Heart left ventricle (tissue), 16 donors: ENCODE measurements at regions of chr1 and their contacts with region 1.

Region 1: GRCh38 chr1:212488397-212489283 is 55.9 kb downstream of the NENF start:
- DNase-seq: peak in 2 of 5 donors; percentile 29 to 41
- ATAC-seq: peak; percentile 41 to 76 (median 68)
- H3K4me3 ChIP-seq: no peak overlapping the region
- H3K27ac ChIP-seq: peak overlapping the region in 3 of 12 donors; percentile 42 to 76 (median 51)
- H3K4me1 ChIP-seq: peaks cover 0 to 48% (median 8%) of the 10 kb centered on the region in 12 donors
- H3K27me3 ChIP-seq: no peaks in the 10 kb centered on the region
- CTCF ChIP-seq: no peak
- POLR2A ChIP-seq: no peak

Region 2: GRCh38 chr1:212503714-212504113 is 15.1 kb after region 1 on chr1:
- intact Hi-C with region 1: no loop called
- DNase-seq: no peak
- ATAC-seq: no peak
- H3K4me3 ChIP-seq: no peak overlapping the region
- H3K27ac ChIP-seq: no peak overlapping the region
- H3K4me1 ChIP-seq: no peaks in the 10 kb centered on the region
- H3K27me3 ChIP-seq: no peaks in the 10 kb centered on the region
- CTCF ChIP-seq: no peak
- POLR2A ChIP-seq: no peak

Region 3: DNA sequence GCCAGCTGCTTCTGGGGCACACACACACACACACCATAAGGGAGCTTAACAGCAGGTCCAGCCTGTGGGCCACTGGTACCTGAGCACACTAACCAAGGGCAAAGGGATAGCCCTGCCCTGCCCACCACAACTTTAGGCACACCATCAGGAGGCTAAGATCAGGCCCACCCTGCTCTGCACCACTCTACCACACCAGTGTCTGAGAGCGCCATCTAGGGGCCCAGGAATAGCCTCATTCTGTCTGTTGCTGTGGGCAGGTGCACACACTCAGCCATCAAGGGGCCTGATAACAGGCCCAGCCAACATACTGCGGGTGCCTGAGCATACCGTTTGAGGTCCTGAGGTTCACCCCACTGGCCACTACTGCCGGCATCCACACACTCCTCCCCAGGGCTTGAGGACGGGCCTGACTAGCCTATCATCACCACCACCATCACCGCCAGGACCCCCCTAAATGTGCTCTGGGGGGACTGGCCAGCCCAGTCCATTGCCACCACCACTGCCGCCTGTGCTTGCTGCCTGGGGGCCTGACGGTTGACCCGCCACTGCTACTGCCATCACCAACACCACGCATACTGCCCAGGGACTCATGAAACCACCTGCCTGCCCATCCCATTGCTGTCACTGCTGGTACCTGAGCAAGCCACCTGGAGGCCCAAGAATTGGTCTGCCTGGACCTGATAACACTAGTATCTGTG is 271.6 kb after region 1 on chr1:
- intact Hi-C with region 1: loop called in 1 of 10 experiments (anchors 10 kb)
- DNase-seq: no peak
- ATAC-seq: peak in 2 of 4 donors; percentile 49 to 65
- H3K4me3 ChIP-seq: no peak overlapping the region
- H3K27ac ChIP-seq: no peak overlapping the region
- H3K4me1 ChIP-seq: peaks cover 0 to 7% (median 0%) of the 10 kb centered on the region in 12 donors
- H3K27me3 ChIP-seq: no peaks in the 10 kb centered on the region
- CTCF ChIP-seq: peak in 3 of 12 donors; percentile 14 to 24 (median 24)
- POLR2A ChIP-seq: no peak